ENCODE measurements at regions of chr1 and their contacts with region 1.

Region 1: DNA sequence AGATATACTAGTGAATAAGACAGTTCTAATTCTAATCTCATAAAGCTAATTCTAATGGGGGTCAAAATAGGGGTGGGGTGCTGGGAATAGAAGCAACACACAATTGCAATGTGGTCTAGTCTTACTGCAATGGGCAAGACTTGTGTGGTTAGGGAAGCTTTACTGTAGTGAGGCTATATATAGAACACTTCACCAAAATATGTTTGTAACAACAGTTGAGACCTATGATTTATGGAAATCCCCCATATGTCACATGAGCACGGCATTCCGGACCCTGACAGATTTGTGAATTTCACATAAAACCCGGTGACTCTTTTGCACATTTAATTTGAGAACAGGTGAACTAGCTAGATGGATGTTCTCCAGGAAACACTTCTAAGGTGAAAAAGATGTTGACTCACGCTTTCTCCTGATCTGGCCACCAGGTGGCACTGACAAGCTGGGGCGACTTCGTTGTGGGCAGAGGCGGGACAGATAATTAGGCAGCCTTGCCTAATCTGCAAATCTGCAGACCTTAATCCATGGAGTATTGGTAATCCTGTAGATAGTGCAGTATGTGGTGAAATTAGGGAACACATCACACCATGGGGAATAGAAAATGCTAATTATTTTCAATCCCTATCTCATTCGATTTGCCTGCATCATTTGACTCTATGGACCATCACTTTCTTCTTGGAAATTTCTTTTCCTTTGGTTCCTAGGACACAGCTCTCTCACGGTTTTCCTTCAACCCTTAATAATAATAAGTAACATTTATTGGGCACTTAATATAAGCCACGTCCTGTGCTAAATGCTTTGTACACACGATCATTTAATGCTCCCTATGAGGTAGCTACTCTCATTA is 37.7 kb downstream of the KIAA0040 start:
- DNase-seq: peak; percentile 76 to 90
- ATAC-seq: peak; percentile 76
- H3K4me3 ChIP-seq: no peak overlapping the region
- H3K27ac ChIP-seq: no peak overlapping the region
- H3K4me1 ChIP-seq: no peaks in the 10 kb centered on the region
- H3K27me3 ChIP-seq: no peaks in the 10 kb centered on the region

Region 2: GRCh38 chr1:175035865-175036264 is 119.0 kb before region 1 on chr1:
- intact Hi-C with region 1: no loop called
- DNase-seq: no peak
- ATAC-seq: no peak
- H3K4me3 ChIP-seq: no peak overlapping the region
- H3K27ac ChIP-seq: no peak overlapping the region
- H3K4me1 ChIP-seq: no peaks in the 10 kb centered on the region
- H3K27me3 ChIP-seq: no peaks in the 10 kb centered on the region

Region 3: DNA sequence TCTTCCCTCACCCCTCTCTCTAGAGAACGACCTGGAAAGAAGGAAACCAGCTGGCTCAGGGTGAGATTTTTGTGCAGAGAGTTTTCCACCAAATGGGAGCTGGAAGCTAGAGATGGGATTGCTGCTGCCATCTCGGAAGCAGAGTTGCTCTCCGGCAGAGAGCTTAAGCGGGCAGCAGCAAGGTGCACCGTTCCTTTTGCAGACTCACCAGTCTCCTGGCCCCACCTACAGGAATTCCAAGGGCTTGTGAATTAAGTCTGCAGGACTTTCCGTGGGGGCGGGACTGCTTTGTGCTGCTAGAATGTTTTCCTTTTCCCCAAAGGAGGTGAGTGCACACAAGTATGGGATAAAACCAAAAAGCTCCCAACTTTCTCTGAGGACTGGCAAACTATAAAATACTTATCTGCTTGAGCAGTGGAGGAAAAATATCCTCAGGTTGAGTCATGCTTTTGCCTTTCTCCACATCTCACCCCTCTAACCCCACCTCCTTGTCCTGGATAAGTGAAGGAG is 66.9 kb after region 1 on chr1:
- intact Hi-C with region 1: loop called (anchors 2 to 5 kb)
- DNase-seq: peak in 1 of 2 donors; percentile 49
- ATAC-seq: no peak
- H3K4me3 ChIP-seq: no peak overlapping the region
- H3K27ac ChIP-seq: peak overlapping the region in 1 of 2 donors; percentile 29
- H3K4me1 ChIP-seq: no peaks in the 10 kb centered on the region
- H3K27me3 ChIP-seq: no peaks in the 10 kb centered on the region

Region 4: GRCh38 chr1:175319418-175320230 is 164.8 kb after region 1 on chr1:
- intact Hi-C with region 1: loop called (anchors 1 to 2 kb)
- DNase-seq: peak; percentile 81 to 88
- ATAC-seq: peak; percentile 94
- H3K4me3 ChIP-seq: no peak overlapping the region
- H3K27ac ChIP-seq: no peak overlapping the region
- H3K4me1 ChIP-seq: no peaks in the 10 kb centered on the region
- H3K27me3 ChIP-seq: no peaks in the 10 kb centered on the region

Region 5: DNA sequence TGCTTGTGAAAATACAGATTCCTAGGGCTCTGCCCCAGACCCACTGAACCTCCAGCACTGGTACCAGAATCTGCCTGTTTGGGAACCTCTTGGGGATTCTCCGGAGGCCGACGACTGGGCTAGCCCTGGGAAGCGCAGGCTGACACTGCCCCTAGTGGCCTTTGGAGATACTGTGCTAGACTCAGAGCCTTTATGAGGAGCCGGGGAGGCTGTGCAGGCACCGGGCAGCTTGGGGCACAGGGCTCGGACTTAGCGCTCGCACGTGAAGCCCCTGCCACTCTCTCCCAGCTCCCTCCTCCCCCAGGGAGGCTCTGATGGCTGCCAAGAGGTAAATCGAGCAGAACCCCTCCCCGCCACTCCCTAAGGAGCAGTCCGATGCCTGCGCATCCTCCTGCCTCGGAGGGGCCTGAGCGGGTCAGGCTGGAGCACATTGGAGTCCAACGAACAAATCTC is 733.2 kb after region 1 on chr1:
- intact Hi-C with region 1: loop called in 1 of 2 experiments (anchors 5 kb)
- DNase-seq: peak; percentile 75 to 88
- ATAC-seq: peak; percentile 84
- H3K4me3 ChIP-seq: no peak overlapping the region
- H3K27ac ChIP-seq: no peak overlapping the region
- H3K4me1 ChIP-seq: peaks cover 6 to 9% of the 10 kb centered on the region in 2 donors
- H3K27me3 ChIP-seq: no peaks in the 10 kb centered on the region

Region 6: DNA sequence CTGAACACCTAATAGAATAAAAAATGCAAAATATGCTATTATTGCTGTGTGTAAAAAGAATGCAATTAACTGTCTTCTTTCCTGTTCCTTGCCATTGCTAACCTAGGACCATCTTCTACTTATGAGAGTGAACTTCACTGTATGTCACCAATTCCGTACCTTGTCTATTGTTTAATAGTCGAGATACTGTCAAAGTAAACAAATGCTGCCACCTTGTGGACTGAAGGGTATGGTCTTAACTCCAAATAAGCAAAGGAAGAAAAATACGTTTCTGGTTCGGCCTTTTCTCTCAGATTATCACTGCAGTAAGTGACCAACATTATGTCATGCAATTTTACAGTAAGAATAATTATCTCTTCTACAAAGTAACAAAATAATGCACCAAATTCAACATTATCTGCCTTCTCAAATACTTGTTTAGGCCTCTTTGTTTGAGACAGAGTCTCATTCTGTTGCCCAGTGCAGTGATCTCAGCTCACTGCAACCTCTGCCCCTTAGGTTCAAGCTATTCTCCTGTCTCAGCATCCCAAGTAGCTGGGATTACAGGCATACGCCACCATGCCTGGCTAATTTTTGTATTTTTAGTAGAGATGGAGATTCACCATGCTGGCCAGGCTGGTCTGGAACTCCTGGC is 918.8 kb after region 1 on chr1:
- intact Hi-C with region 1: loop called in 1 of 2 experiments (anchors 10 kb)
- DNase-seq: no peak
- ATAC-seq: peak; percentile 69
- H3K4me3 ChIP-seq: no peak overlapping the region
- H3K27ac ChIP-seq: no peak overlapping the region
- H3K4me1 ChIP-seq: no peaks in the 10 kb centered on the region
- H3K27me3 ChIP-seq: no peaks in the 10 kb centered on the region

Region 7: DNA sequence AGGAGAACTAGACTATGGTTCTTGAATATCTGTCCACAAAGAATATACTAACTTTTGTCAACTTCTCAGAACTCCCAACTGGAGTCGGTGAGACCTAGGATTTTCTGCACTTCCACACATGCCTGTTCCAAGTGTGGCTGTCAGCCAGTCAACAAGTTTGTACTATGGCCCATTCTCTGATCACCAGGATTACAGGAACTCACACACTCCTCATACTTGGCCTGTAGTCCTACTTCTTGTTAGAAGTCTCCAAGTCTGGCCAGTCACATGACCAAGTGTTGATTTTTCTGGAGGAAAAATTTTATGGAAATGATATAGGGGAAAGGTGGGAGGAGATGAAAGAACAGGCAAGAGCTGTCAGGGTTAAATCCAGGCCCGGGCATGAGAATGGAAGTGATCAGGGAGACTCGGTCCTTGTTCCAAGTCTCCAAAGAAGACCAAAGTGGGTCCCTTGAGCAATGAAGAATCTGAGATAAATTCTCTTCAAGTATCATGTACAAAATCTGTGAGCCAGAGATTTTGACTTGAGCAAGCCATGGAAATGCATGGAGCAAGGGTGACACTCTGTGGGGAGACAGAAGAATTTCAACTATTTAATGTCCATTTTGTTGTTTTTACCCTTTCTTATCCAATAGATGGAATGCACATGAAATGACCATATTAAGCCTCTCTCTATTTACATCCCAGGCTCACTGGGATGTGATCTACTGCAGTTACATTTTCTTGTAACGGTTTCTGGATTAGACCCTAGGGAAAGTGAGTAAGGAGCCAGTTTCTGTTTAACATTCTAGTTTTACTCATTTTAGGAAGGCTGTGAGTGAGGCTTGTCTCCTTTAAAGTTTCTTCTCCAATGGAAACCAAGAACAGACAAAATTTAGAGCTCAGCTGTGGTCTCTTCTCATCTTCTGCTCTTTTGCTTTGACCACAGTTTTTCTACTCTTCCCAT is 1688.8 kb after region 1 on chr1:
- intact Hi-C with region 1: loop called (anchors 5 to 10 kb)
- DNase-seq: peak in 1 of 2 donors; percentile 50
- ATAC-seq: peak; percentile 76
- H3K4me3 ChIP-seq: no peak overlapping the region
- H3K27ac ChIP-seq: no peak overlapping the region
- H3K4me1 ChIP-seq: no peaks in the 10 kb centered on the region
- H3K27me3 ChIP-seq: no peaks in the 10 kb centered on the region